CD4-positive, alpha-beta memory T cell (primary cell): ENCODE measurements at regions of chr16 and their contacts with region 1.

Region 1: GRCh38 chr16:50326949-50327402 is 41.8 kb downstream of the BRD7 start:
- DNase-seq: peak; percentile 80 to 90 (median 84)
- H3K4me3 ChIP-seq: no peak overlapping the region
- H3K4me3 Mint-ChIP-seq: peak overlapping the region in 4 of 8 donors; percentile 37 to 70 (median 44)
- H3K27ac ChIP-seq: peak overlapping the region; percentile 51
- H3K27ac Mint-ChIP-seq: peak overlapping the region; percentile 74 to 98 (median 90)
- H3K4me1 ChIP-seq: peaks cover 32% of the 10 kb centered on the region
- H3K4me1 Mint-ChIP-seq: peaks cover 34 to 71% (median 38%) of the 10 kb centered on the region in 4 donors
- H3K27me3 ChIP-seq: no peaks in the 10 kb centered on the region
- H3K27me3 Mint-ChIP-seq: no peaks in the 10 kb centered on the region

Region 2: GRCh38 chr16:49811644-49812334 is 515.2 kb before region 1 on chr16:
- CTCF ChIA-PET with region 1: no interaction called
- POLR2A ChIA-PET with region 1: no interaction called
- intact Hi-C with region 1: no loop called
- DNase-seq: no peak
- H3K4me3 ChIP-seq: no peak overlapping the region
- H3K4me3 Mint-ChIP-seq: no peak overlapping the region
- H3K27ac ChIP-seq: no peak overlapping the region
- H3K27ac Mint-ChIP-seq: no peak overlapping the region
- H3K4me1 ChIP-seq: no peaks in the 10 kb centered on the region
- H3K4me1 Mint-ChIP-seq: no peaks in the 10 kb centered on the region
- H3K27me3 ChIP-seq: no peaks in the 10 kb centered on the region
- H3K27me3 Mint-ChIP-seq: peaks cover 2% of the 10 kb centered on the region in 2 donors

Region 3: DNA sequence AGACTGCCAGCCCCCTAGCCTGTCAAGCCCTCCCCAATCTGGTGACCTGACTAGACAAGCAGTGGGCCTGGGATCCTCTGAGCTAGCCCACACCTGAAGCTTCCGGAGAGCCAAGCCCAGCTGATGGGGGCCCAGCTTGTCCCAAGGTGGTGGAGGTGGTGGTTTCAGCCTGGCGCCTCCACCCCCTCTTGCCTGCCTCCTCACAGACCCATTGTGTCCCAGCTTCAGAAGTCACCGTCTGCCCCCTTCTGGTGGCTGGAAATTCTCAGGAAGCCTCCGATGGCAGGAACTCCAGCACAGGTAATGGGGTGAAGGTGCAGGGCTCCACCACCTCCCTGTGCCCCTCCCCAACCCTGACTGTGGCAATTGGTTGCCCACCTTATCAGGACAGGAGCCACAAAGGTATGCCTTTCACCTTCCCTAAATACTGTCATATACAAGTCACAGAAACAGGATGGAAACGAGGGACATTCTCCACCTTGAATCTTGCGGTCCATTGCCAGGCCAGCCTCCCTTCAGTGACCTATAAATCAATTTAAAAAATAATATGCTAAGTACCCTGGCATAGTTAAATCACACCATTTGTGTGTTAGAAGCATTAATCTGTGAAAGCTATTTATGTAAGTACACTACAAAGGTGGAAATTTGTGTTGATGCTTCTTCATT is 405.1 kb before region 1 on chr16:
- CTCF ChIA-PET with region 1: no interaction called
- POLR2A ChIA-PET with region 1: no interaction called
- intact Hi-C with region 1: no loop called
- DNase-seq: peak in 4 of 5 donors; percentile 5 to 23 (median 14)
- H3K4me3 ChIP-seq: no peak overlapping the region
- H3K4me3 Mint-ChIP-seq: no peak overlapping the region
- H3K27ac ChIP-seq: no peak overlapping the region
- H3K27ac Mint-ChIP-seq: peak overlapping the region in 1 of 7 donors; percentile 18
- H3K4me1 ChIP-seq: no peaks in the 10 kb centered on the region
- H3K4me1 Mint-ChIP-seq: no peaks in the 10 kb centered on the region
- H3K27me3 ChIP-seq: no peaks in the 10 kb centered on the region
- H3K27me3 Mint-ChIP-seq: peaks cover 7 to 8% of the 10 kb centered on the region in 2 donors

Region 4: DNA sequence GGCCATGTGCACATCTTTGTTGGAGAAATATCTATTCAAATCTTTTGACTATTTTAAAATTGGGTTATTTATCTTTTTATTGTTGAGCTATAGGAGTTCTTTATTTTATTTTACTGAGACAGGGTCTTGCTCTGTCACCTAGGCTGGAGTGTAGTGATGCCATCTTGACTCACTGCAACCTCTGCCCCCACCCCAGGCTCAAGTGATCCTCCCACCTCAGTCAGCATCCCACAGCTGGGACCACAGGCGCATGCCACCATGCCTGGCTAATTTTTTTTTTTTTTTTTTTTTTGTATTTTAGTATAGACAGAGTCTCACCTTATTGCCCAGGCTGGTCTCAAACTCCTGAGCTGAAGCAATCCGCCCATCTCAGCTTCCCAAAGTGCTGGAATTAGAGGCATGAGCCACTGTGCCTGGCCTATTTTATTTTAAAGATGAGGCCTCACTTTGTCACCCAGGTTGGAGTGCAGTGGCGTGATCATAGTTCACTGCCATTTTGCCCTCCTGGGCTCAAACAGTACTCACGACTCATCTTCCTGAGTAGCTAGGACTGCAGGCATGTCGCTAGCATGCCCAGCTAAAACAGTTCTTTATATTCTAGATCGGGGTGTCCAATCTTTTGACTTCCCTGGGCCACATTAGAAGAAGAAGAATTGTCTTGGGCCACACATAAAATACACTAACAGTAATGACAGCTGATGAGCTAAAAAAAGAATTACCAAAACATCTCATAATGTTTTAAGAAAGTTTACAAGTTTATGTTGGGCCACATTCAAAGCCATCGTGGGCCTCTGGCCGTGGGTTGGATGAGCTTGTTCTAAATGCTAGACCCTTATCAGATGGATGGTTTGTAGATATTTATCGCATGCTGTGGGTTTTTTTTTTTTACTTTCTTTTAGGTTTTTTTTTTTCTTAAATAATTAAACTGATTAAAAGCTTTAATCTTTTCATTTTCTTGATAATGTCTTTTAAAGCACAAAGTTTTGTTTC is 160.2 kb before region 1 on chr16:
- CTCF ChIA-PET with region 1: no interaction called
- POLR2A ChIA-PET with region 1: no interaction called
- intact Hi-C with region 1: no loop called
- DNase-seq: peak in 1 of 5 donors; percentile 14
- H3K4me3 ChIP-seq: no peak overlapping the region
- H3K4me3 Mint-ChIP-seq: peak overlapping the region in 7 of 8 donors; percentile 34 to 79 (median 67)
- H3K27ac ChIP-seq: no peak overlapping the region
- H3K27ac Mint-ChIP-seq: peak overlapping the region; percentile 1 to 86 (median 42)
- H3K4me1 ChIP-seq: peaks cover 68% of the 10 kb centered on the region
- H3K4me1 Mint-ChIP-seq: peaks cover 32 to 66% (median 52%) of the 10 kb centered on the region in 4 donors
- H3K27me3 ChIP-seq: no peaks in the 10 kb centered on the region
- H3K27me3 Mint-ChIP-seq: no peaks in the 10 kb centered on the region

Region 5: DNA sequence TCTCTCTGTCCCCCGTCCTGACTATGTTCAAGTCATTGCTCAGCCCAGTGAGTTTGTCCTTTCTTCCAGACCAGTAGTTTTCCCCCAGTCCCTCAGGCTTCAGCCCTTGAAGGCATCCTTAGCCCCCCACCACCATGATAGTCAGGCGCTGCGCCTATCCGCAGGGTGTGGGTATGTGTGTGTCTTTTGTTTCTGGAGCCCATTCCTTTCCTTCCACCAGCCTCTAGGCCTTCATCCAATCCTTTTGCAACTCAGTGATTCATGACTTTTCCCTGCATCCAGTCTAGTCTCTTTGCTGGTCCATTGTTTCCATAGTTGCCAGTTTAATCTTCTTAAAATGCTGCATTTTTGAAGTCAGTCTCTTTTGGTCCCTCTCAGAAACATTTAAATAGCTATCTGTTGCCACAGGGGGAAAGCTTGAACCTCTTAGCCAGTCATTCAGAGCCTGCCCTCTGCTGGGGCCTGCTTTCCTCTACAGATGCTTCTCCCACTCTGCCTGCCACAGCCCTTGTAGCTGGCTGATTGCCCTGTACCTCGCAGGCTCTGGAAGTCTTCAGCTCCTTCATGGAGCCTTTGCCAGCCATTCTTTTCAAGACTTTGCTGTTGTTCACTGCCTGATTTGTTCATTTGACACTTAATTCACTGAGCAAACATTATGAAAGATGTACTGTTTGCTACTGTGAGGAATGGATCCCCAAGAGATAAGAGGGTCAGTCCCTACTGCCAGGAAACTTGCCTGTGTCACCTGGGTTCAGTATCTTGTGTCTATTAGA is 116.5 kb before region 1 on chr16:
- CTCF ChIA-PET with region 1: interaction called, 7 read pairs
- POLR2A ChIA-PET with region 1: interaction called, 3 read pairs
- intact Hi-C with region 1: loop called (anchors 5 kb)
- DNase-seq: peak; percentile 53 to 63 (median 56)
- H3K4me3 ChIP-seq: no peak overlapping the region
- H3K4me3 Mint-ChIP-seq: no peak overlapping the region
- H3K27ac ChIP-seq: no peak overlapping the region
- H3K27ac Mint-ChIP-seq: peak overlapping the region; percentile 17 to 91 (median 59)
- H3K4me1 ChIP-seq: peaks cover 4% of the 10 kb centered on the region
- H3K4me1 Mint-ChIP-seq: peaks cover 16 to 26% (median 26%) of the 10 kb centered on the region in 4 donors
- H3K27me3 ChIP-seq: no peaks in the 10 kb centered on the region
- H3K27me3 Mint-ChIP-seq: no peaks in the 10 kb centered on the region

Region 6: DNA sequence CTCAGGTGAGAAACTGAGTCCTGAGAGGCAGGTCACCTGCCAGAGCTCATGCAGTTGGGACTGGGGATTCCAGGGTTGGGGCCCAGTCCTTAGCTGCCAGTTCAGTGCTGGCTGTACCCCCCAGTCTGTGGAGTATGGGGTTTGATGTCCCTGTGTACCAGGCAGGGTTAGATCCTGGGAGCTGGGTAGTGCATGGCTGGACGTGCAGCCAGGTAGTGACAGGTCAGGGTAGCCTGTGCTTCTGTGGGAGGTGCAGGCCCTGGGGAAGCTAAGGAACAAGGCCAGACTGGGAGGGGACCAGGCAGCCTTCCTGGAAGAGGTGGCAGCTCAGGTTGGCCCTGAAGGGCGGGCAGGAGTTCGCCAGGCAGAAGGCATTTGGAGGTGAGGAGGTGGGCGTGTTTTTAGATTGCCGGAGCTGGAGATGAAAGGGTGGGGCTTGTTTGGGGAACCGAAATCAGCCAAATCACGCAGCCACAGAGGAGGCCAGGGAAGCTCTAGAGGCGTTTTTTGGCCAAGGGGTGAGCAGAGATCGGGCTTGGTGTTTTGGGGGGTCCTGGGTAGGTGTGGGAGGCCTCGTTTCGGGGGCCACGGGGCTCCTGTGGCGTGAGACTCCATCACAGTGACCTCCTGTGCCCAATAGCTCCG is 53.2 kb before region 1 on chr16:
- CTCF ChIA-PET with region 1: interaction called, 14 read pairs
- POLR2A ChIA-PET with region 1: interaction called, 55 read pairs
- intact Hi-C with region 1: no loop called
- DNase-seq: peak; percentile 24 to 69 (median 35)
- H3K4me3 ChIP-seq: peak overlapping the region; percentile 77 to 90
- H3K4me3 Mint-ChIP-seq: peak overlapping the region; percentile 90 to 98 (median 92)
- H3K27ac ChIP-seq: peak overlapping the region; percentile 71
- H3K27ac Mint-ChIP-seq: peak overlapping the region; percentile 96 to 99 (median 98)
- H3K4me1 ChIP-seq: peaks cover 98% of the 10 kb centered on the region
- H3K4me1 Mint-ChIP-seq: peaks cover 59 to 100% (median 89%) of the 10 kb centered on the region in 4 donors
- H3K27me3 ChIP-seq: no peaks in the 10 kb centered on the region
- H3K27me3 Mint-ChIP-seq: no peaks in the 10 kb centered on the region

Region 7: GRCh38 chr16:50297301-50298067 is 29.5 kb before region 1 on chr16:
- CTCF ChIA-PET with region 1: interaction called, 10 read pairs
- POLR2A ChIA-PET with region 1: interaction called, 3 read pairs
- intact Hi-C with region 1: no loop called
- DNase-seq: no peak
- H3K4me3 ChIP-seq: no peak overlapping the region
- H3K4me3 Mint-ChIP-seq: no peak overlapping the region
- H3K27ac ChIP-seq: no peak overlapping the region
- H3K27ac Mint-ChIP-seq: peak overlapping the region in 3 of 7 donors; percentile 25 to 66 (median 27)
- H3K4me1 ChIP-seq: no peaks in the 10 kb centered on the region
- H3K4me1 Mint-ChIP-seq: peaks cover 3 to 15% (median 5%) of the 10 kb centered on the region in 4 donors
- H3K27me3 ChIP-seq: no peaks in the 10 kb centered on the region
- H3K27me3 Mint-ChIP-seq: no peaks in the 10 kb centered on the region

Region 8: DNA sequence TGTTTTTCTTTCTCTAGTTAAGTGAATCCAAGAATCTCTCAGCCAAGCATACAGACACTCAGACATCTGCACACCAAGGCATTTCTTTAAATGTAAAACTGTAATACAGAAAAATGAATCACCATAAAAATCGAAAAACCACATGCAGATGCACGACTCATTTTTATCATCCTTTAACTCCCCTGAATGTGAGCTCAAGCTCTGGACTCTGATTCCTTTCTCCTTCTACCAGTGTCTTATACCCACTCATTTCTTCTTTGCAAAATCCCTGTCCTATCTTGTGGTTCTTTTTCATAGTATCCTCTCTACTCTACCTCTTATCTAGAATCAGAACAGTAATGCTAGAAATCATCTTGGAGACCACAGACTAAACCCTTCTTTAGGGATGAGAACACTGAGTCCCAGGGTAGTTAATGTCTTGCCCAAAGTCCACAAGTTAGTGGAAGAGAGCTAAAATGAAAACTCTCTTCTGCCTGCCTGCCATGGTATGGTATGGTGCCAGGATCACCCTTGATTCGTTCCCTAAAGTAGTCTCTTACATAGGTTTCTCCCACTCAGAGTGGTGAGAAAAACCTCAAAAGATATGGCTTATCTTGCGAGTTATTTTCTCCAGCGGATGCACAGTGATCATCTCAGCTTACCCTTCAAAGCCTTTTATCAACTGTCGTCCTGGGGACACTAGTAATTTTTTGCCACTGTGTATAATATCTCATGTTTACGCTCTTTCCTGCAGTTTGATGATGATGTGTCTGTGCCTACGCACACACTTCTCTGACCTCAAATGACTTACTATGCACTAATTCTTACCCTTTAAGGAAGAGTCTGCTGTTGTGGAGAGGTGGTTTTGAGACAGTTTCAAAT is 11.6 kb after region 1 on chr16:
- CTCF ChIA-PET with region 1: interaction called, 135 read pairs
- POLR2A ChIA-PET with region 1: interaction called, 277 read pairs
- intact Hi-C with region 1: loop called (anchors 1 kb)
- DNase-seq: peak; percentile 51 to 86 (median 73)
- H3K4me3 ChIP-seq: no peak overlapping the region
- H3K4me3 Mint-ChIP-seq: peak overlapping the region; percentile 2 to 72 (median 49)
- H3K27ac ChIP-seq: peak overlapping the region; percentile 79
- H3K27ac Mint-ChIP-seq: peak overlapping the region; percentile 88 to 99 (median 95)
- H3K4me1 ChIP-seq: peaks cover 34% of the 10 kb centered on the region
- H3K4me1 Mint-ChIP-seq: peaks cover 25 to 61% (median 44%) of the 10 kb centered on the region in 4 donors
- H3K27me3 ChIP-seq: no peaks in the 10 kb centered on the region
- H3K27me3 Mint-ChIP-seq: no peaks in the 10 kb centered on the region

Region 9: GRCh38 chr16:50368410-50369132 is 41.6 kb after region 1 on chr16 and contains the start of gene BRD7:
- CTCF ChIA-PET with region 1: interaction called, 628 read pairs
- POLR2A ChIA-PET with region 1: interaction called, 32 read pairs
- intact Hi-C with region 1: loop called (anchors 1 kb)
- DNase-seq: peak; percentile 58 to 77 (median 66)
- H3K4me3 ChIP-seq: peak within 1 kb of the TSS; percentile 57 to 59
- H3K4me3 Mint-ChIP-seq: peak within 1 kb of the TSS; percentile 89 to 96 (median 92)
- H3K27ac ChIP-seq: peak within 1 kb of the TSS; percentile 70
- H3K27ac Mint-ChIP-seq: peak within 1 kb of the TSS; percentile 83 to 99 (median 96)
- H3K4me1 ChIP-seq: peaks cover 53% of the 10 kb centered on the region
- H3K4me1 Mint-ChIP-seq: peaks cover 38 to 58% (median 46%) of the 10 kb centered on the region in 4 donors
- H3K27me3 ChIP-seq: no peaks in the 10 kb centered on the region
- H3K27me3 Mint-ChIP-seq: peaks cover 0 to 1% of the 10 kb centered on the region in 2 donors
- total RNA-seq, gene BRD7: 86.6 to 97.7 TPM